ENCODE measurements at regions of chr2 and their contacts with region 1.

Region 1: DNA sequence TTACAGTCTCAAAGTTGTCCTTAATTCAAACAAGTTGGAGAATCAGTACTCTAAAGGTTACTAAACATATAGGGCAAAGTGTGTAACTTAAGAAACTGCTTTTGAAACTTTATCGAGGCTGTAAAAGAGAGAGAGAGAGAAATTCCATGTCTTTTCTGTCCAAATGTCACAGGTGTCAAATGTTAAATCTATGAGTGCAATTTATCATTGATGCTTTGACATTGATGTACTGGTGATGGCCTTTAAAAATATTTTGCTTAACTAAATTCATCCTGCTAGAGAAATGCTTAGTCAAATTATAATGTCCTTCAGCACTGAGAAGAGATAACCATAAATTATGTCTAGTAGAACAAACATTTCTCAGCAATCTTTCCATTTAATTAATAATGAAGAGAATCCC is 1602.1 kb upstream of the TMEFF2 start:
- DNase-seq: no peak
- H3K4me3 ChIP-seq: no peak overlapping the region
- H3K27ac ChIP-seq: no peak overlapping the region
- H3K4me1 ChIP-seq: no peaks in the 10 kb centered on the region
- H3K27me3 ChIP-seq: no peaks in the 10 kb centered on the region
- CTCF ChIP-seq: no peak
- POLR2A ChIP-seq: no peak

Region 2: GRCh38 chr2:192978395-192978794 is 818.5 kb before region 1 on chr2:
- CTCF ChIA-PET with region 1: no interaction called
- POLR2A ChIA-PET with region 1: no interaction called
- dilution Hi-C with region 1: no loop called
- intact Hi-C with region 1: loop called (anchors 5 kb)
- DNase-seq: no peak
- H3K4me3 ChIP-seq: no peak overlapping the region
- H3K27ac ChIP-seq: no peak overlapping the region
- H3K4me1 ChIP-seq: no peaks in the 10 kb centered on the region
- H3K27me3 ChIP-seq: no peaks in the 10 kb centered on the region
- CTCF ChIP-seq: no peak
- POLR2A ChIP-seq: no peak

Region 3: GRCh38 chr2:193527146-193527545 is 269.7 kb before region 1 on chr2:
- CTCF ChIA-PET with region 1: no interaction called
- POLR2A ChIA-PET with region 1: no interaction called
- dilution Hi-C with region 1: no loop called
- intact Hi-C with region 1: no loop called
- DNase-seq: peak; percentile 24
- H3K4me3 ChIP-seq: no peak overlapping the region
- H3K27ac ChIP-seq: no peak overlapping the region
- H3K4me1 ChIP-seq: no peaks in the 10 kb centered on the region
- H3K27me3 ChIP-seq: no peaks in the 10 kb centered on the region
- CTCF ChIP-seq: no peak
- POLR2A ChIP-seq: no peak

Region 4: GRCh38 chr2:194087089-194087958 is 290.5 kb after region 1 on chr2:
- CTCF ChIA-PET with region 1: no interaction called
- POLR2A ChIA-PET with region 1: no interaction called
- dilution Hi-C with region 1: no loop called
- intact Hi-C with region 1: no loop called
- DNase-seq: no peak
- H3K4me3 ChIP-seq: no peak overlapping the region
- H3K27ac ChIP-seq: no peak overlapping the region
- H3K4me1 ChIP-seq: no peaks in the 10 kb centered on the region
- H3K27me3 ChIP-seq: no peaks in the 10 kb centered on the region
- CTCF ChIP-seq: no peak
- POLR2A ChIP-seq: no peak

Measured in endothelial cell of umbilical vein (primary cell).